Aorta (tissue), 5 donors: ENCODE measurements at regions of chr11 and their contacts with region 1.

Region 1: GRCh38 chr11:123438191-123438627 is 8.1 kb downstream of the GRAMD1B start:
- DNase-seq: no peak
- ATAC-seq: no peak
- H3K4me3 ChIP-seq: no peak overlapping the region
- H3K27ac ChIP-seq: no peak overlapping the region
- H3K4me1 ChIP-seq: no peaks in the 10 kb centered on the region
- H3K27me3 ChIP-seq: no peaks in the 10 kb centered on the region

Region 2: DNA sequence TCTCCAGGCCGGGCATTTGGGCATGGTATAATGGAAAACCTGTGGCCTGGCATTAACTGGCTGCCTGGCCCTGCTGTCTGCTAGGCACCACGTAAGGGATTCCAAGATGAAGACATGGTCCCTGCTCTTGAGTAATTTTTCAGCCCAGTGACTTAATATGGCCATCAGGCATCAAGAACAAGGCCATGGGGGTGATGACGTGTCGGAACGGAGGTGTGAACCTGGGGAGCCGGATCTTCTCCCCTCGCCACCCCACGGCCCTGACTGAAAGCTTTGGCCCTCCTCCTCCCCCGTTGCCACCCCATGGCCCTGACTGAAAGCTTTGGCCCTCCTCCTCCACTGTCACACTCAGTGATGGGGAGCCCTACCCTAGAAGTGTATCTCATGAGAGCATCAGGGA is 50.2 kb after region 1 on chr11:
- intact Hi-C with region 1: loop called in 1 of 2 experiments (anchors 2 kb)
- DNase-seq: no peak
- ATAC-seq: no peak
- H3K4me3 ChIP-seq: no peak overlapping the region
- H3K27ac ChIP-seq: no peak overlapping the region
- H3K4me1 ChIP-seq: no peaks in the 10 kb centered on the region
- H3K27me3 ChIP-seq: no peaks in the 10 kb centered on the region